Activated CD4-positive, alpha-beta memory T cell treated with anti-CD3 and anti-CD28 coated beads for 36 hours (primary cell): ENCODE measurements at regions of chr2 and their contacts with region 1.

Region 1: DNA sequence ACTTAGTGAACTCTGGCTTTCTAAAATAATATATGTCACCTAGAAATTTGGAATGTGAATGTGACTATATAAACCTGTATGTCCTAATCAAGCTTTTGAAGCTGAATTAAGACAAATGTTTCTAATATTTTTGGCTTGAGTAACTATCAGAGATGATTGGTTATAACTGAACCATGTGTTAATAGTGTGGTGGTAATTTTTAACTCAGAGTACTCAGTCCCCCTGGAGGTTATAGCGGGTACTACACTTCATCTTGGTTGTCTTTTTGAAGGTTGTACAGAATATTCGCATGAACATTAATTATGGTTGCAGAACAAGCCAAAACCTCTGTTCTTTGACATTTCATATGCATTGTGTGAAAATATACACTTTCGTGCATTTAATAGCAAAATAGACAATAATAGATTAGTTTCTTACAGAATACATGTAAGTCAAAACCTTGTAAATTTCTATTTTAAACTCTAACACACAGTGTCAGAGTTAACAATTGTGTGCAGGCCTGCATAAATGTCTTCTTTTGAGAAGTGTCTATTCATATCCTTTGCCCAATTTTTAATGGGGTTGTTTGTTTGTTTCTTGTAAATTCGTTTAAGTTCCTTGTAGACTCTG is 86.0 kb downstream of the OSBPL6 start:
- DNase-seq: no peak
- H3K4me3 Mint-ChIP-seq: no peak overlapping the region
- H3K27ac Mint-ChIP-seq: no peak overlapping the region
- H3K4me1 Mint-ChIP-seq: no peaks in the 10 kb centered on the region
- H3K27me3 Mint-ChIP-seq: peaks cover 17% of the 10 kb centered on the region

Region 2: DNA sequence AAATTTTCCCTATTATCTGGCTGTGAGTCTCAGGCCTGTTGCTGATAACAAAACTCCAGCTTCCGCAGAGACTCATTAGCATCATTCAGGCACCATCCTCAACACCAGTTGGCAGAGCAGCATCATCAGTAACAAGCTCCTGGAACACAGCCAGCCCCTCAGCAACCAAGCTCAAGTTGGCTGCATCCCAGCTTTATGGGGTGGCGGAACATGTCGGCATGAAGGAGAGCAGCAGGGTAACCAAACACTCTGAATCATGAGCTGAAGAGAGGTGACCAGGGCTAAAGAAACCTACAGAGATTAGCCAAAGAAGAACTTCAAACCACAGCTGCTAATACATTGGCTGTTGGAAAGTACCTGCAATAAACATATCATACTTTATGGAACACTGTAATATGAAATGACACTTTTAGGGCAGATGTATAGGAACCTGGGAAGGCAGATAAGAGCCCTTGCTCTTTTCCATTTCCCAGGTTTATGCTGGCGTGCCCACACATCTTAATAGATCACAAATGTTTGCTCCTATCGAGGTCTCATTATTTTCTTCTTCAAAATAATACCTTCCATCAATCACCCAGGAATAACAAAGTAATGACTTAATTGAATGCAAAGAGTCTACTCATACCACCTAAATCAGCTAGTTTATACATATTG is 271.6 kb before region 1 on chr2:
- CTCF ChIA-PET with region 1: no interaction called
- POLR2A ChIA-PET with region 1: no interaction called
- intact Hi-C with region 1: no loop called
- DNase-seq: no peak
- H3K4me3 Mint-ChIP-seq: no peak overlapping the region
- H3K27ac Mint-ChIP-seq: no peak overlapping the region
- H3K4me1 Mint-ChIP-seq: no peaks in the 10 kb centered on the region
- H3K27me3 Mint-ChIP-seq: peaks cover 2% of the 10 kb centered on the region

Region 3: GRCh38 chr2:178128836-178129630 is 151.3 kb before region 1 on chr2:
- CTCF ChIA-PET with region 1: interaction called, 3 read pairs
- POLR2A ChIA-PET with region 1: no interaction called
- intact Hi-C with region 1: loop called (anchors 1 kb)
- DNase-seq: no peak
- H3K4me3 Mint-ChIP-seq: no peak overlapping the region
- H3K27ac Mint-ChIP-seq: no peak overlapping the region
- H3K4me1 Mint-ChIP-seq: no peaks in the 10 kb centered on the region
- H3K27me3 Mint-ChIP-seq: no peaks in the 10 kb centered on the region